ENCODE measurements at regions of chr9 and their contacts with region 1.

Region 1: GRCh38 chr9:3880851-3881250 is 355.1 kb upstream of the RFX3 start:
- DNase-seq: no peak
- H3K4me3 Mint-ChIP-seq: no peak overlapping the region
- H3K27ac Mint-ChIP-seq: no peak overlapping the region
- H3K4me1 Mint-ChIP-seq: no peaks in the 10 kb centered on the region
- H3K27me3 Mint-ChIP-seq: no peaks in the 10 kb centered on the region

Region 2: GRCh38 chr9:3931996-3932906 is 51.4 kb after region 1 on chr9:
- intact Hi-C with region 1: loop called (anchors 2 kb)
- DNase-seq: no peak
- H3K4me3 Mint-ChIP-seq: no peak overlapping the region
- H3K27ac Mint-ChIP-seq: peak overlapping the region; percentile 61
- H3K4me1 Mint-ChIP-seq: peaks cover 16% of the 10 kb centered on the region
- H3K27me3 Mint-ChIP-seq: no peaks in the 10 kb centered on the region